ENCODE measurements at regions of chr19 and their contacts with region 1.

Region 1: DNA sequence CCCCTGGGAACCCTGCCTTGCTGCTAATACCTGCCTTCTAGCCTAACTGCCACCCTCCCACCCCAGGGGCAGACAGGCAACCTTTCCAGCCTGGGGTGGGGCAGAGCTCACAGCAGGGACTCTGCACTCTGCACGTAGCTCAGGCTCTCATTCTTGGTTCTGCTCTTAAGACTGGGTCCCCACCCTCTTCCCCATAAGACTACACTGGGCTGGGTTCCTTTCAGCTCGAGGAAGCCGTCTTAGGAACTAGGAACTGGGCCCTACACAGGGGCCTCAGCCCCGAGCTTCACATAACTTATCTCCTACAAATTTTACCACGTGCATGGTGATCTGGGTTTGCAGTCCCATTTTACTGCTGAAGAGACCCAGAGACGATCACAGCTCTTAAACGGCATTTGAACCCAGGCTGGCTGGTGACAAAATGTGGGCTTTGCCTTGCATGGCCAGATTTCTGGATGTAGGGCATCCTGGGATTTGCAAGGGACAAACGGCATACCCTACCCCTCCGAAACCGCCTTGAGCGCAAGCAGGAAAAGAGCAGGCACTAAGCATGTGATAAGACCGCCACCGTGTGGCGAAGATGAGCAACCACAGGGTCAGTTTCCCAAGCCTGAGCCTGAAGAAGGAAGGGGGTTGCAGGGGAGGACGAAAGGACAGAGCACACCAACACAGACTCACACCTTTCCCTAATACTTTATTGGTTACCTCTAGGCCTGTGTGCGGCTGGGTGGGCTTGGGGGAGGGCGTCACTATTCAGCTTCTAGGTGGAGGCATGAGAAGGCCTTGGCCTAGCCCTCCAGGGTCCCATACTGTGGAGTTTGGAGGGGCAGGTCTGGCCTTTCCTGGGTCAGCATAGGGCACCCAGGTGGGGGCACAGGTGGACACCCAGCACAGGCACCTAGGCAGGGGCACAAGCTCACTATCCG is 5.1 kb downstream of the JUNB start:
- DNase-seq: peak; percentile 83
- H3K4me3 ChIP-seq: no peak overlapping the region
- H3K27ac ChIP-seq: peak overlapping the region; percentile 87
- H3K4me1 ChIP-seq: peaks cover 14% of the 10 kb centered on the region
- H3K27me3 ChIP-seq: no peaks in the 10 kb centered on the region
- CTCF ChIP-seq: peak; percentile 89

Region 2: DNA sequence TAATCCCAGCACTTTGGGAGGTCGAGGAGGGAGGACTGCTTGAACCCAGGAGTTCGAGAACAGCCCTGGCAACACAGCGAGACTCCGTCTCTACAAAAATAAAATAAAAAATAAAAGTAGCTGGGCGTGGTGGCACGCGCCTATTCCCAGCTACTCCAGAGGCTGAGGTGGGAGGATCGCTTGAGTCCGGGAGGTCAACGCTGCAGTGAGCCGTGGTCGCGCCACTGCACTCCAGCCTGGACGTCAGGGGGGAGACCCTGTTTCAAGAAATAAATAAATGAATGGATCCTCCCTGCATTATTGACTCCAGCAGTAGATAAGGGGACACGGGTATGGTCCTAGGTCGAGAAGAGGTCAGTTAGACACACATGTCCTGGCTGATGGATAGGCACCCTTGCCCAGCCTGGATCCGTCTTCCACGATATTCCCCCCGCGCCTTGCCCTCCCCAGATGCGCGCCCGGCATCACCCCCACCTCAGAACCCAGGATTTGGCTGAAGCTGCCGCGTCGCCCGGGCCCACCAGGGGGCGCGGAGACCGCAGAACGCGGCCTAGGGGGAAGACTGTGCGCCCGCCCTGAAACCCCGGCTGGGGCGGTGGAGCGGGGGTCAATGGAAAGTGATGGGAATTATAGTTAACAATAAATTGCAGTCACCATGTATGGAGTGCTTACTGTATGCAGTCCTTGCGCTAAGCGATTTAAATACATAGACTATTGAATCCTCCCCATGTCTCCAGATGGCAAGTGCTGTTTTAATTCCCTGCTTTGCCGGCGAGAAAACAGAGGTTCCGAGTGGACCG is 19.0 kb before region 1 on chr19:
- intact Hi-C with region 1: loop called (anchors 2 kb)
- DNase-seq: peak; percentile 90
- H3K4me3 ChIP-seq: peak overlapping the region; percentile 60
- H3K27ac ChIP-seq: peak overlapping the region; percentile 91
- H3K4me1 ChIP-seq: peaks cover 4% of the 10 kb centered on the region
- H3K27me3 ChIP-seq: no peaks in the 10 kb centered on the region
- CTCF ChIP-seq: peak; percentile 99

Region 3: DNA sequence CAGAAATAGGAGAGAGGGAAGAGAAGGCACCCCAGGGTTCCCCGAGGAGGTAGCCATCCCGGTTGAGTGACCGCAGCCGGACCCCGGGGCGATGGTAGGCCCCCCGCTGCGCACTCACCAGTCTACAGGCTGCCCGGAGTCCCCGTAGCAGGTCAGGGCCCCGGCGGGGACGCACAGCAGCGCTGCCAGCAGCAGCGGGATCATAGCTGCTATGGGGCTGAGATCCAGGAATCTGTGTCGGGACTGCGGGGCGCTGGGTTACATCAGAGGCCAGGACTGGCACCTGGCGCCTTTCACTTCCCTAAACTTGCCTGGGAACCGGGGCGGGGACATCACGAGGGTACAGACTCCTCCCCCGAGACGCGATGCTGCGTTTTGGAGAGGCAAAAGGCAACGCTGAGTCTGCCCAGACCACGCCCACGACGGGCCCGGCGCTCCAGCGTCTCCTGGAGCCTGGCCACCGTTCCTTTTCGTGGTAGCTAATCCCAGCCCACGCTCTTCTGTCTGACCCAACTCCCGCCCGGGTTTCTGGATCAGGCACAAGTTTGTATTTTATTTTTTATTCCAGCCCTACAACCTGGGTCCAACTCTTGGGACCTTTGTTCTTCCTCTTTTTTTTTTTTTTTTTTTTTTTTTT is 84.9 kb after region 1 on chr19 and contains the start of gene DNASE2:
- intact Hi-C with region 1: no loop called
- DNase-seq: peak; percentile 98
- H3K4me3 ChIP-seq: peak within 1 kb of the TSS; percentile 75
- H3K27ac ChIP-seq: peak within 1 kb of the TSS; percentile 78
- H3K4me1 ChIP-seq: no peaks in the 10 kb centered on the region
- H3K27me3 ChIP-seq: no peaks in the 10 kb centered on the region
- CTCF ChIP-seq: no peak
- total RNA-seq, gene DNASE2: 29.0 to 33.5 TPM